Activated T-helper 2 cell treated with anti-CD3 and anti-CD28 coated beads, Interferon-gamma antibody, Interleukin-2, Interleukin-4, amounts not matched to agents 10 μg/mL and 5 μg/mL and 100 μg/mL, durations not matched to agents 14 hours and 24 hours and 36 hours (primary cell): ENCODE measurements at regions of chr3 and their contacts with region 1.

Region 1: DNA sequence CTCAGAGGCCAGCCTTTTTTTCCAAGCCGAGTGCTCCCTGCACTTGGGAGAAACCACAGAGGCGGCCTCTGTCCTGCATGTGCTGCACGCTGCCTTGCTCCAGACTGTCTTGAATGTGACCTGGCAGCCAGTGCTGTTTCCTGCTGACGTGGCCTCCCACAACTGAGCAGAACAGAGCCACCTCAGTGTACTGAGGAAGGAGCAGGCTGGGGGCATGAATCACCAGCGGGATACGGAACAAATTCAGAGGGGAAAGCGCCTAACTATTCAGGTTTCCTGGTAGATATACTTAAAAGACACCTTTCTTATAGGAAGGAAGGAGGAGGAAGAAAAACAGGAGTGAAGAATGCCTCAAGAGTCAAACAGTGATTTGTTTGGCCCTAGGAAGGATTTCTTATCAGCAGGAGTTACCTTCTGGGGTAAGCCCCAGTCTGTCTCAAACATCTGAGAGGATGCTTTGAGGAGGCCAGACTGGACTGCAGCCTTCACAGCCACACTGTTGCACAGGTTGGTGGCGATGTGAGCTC is 114.0 kb downstream of the FNDC3B start:
- DNase-seq: no peak
- H3K4me3 Mint-ChIP-seq: no peak overlapping the region
- H3K27ac Mint-ChIP-seq: peak overlapping the region; percentile 61
- H3K4me1 Mint-ChIP-seq: peaks cover 25% of the 10 kb centered on the region
- H3K27me3 Mint-ChIP-seq: no peaks in the 10 kb centered on the region

Region 2: GRCh38 chr3:172138795-172139441 is 14.5 kb before region 1 on chr3:
- intact Hi-C with region 1: loop called (anchors 2 kb)
- DNase-seq: no peak
- H3K4me3 Mint-ChIP-seq: no peak overlapping the region
- H3K27ac Mint-ChIP-seq: peak overlapping the region; percentile 91
- H3K4me1 Mint-ChIP-seq: peaks cover 62% of the 10 kb centered on the region
- H3K27me3 Mint-ChIP-seq: no peaks in the 10 kb centered on the region

Region 3: GRCh38 chr3:172270557-172271166 is 117.3 kb after region 1 on chr3:
- intact Hi-C with region 1: no loop called
- DNase-seq: no peak
- H3K4me3 Mint-ChIP-seq: no peak overlapping the region
- H3K27ac Mint-ChIP-seq: no peak overlapping the region
- H3K4me1 Mint-ChIP-seq: no peaks in the 10 kb centered on the region
- H3K27me3 Mint-ChIP-seq: no peaks in the 10 kb centered on the region